PC-3 (cell line): ENCODE measurements at regions of chr6 and their contacts with region 1.

Region 1: GRCh38 chr6:41367700-41368099 is 32.3 kb downstream of the NCR2 start:
- DNase-seq: peak; percentile 77
- ATAC-seq: peak; percentile 93
- H3K4me3 ChIP-seq: no peak overlapping the region
- H3K27ac ChIP-seq: no peak overlapping the region
- H3K4me1 ChIP-seq: peaks cover 5% of the 10 kb centered on the region; the same call in 1 of the 2 replicates
- H3K27me3 ChIP-seq: peaks cover 53% of the 10 kb centered on the region
- CTCF ChIP-seq: peak; percentile 87

Region 2: GRCh38 chr6:41399424-41399823 is 31.7 kb after region 1 on chr6:
- CTCF ChIA-PET with region 1: interaction called, 11 read pairs
- POLR2A ChIA-PET with region 1: no interaction called
- intact Hi-C with region 1: no loop called
- DNase-seq: no peak
- ATAC-seq: no peak
- H3K4me3 ChIP-seq: no peak overlapping the region
- H3K27ac ChIP-seq: no peak overlapping the region
- H3K4me1 ChIP-seq: no peaks in the 10 kb centered on the region
- H3K27me3 ChIP-seq: peaks cover 81% of the 10 kb centered on the region
- CTCF ChIP-seq: no peak

Region 3: DNA sequence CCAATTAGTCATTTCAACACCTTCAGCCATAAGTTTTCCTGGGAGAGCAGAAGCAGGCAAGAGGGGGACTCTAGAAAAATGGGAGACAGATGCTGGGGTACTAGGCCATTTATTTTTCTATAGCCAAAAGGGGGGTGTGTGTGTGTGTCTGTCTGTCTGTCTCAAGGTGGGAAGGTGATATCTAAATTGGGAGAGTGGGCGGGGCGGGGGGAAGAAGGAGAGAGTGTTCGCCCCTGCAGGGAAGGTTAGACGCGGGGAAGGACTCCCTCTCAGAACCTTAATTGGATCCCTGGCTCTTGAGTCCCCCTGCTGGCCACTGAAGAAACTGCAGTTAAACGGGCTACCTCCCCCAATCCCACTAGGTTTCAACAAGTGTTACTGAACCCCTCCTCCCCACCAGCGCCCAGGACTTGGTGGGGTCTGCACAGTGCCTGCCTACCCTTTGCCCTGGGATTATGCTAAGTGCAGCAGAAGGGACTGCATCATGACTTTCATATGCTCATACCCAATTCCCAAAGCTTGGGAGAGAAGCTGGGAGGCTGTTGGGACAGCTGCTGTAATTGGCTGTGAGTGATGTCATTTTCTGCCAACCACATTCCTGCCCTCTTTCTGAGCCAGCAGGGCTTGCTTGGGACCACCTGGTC is 224.3 kb after region 1 on chr6:
- CTCF ChIA-PET with region 1: interaction called, 3 read pairs
- POLR2A ChIA-PET with region 1: no interaction called
- intact Hi-C with region 1: loop called (anchors 1 kb)
- DNase-seq: peak; percentile 80
- ATAC-seq: peak; percentile 87
- H3K4me3 ChIP-seq: no peak overlapping the region
- H3K27ac ChIP-seq: no peak overlapping the region
- H3K4me1 ChIP-seq: no peaks in the 10 kb centered on the region
- H3K27me3 ChIP-seq: no peaks in the 10 kb centered on the region
- CTCF ChIP-seq: peak; percentile 90

Region 4: GRCh38 chr6:41608443-41609151 is 240.9 kb after region 1 on chr6:
- CTCF ChIA-PET with region 1: no interaction called
- POLR2A ChIA-PET with region 1: no interaction called
- intact Hi-C with region 1: no loop called
- DNase-seq: no peak
- ATAC-seq: no peak
- H3K4me3 ChIP-seq: no peak overlapping the region
- H3K27ac ChIP-seq: no peak overlapping the region
- H3K4me1 ChIP-seq: no peaks in the 10 kb centered on the region
- H3K27me3 ChIP-seq: no peaks in the 10 kb centered on the region
- CTCF ChIP-seq: no peak